ENCODE measurements at regions of chr1 and their contacts with region 1.

Region 1: GRCh38 chr1:110312188-110313121 is 26.7 kb upstream of the RBM15 start:
- DNase-seq: peak; percentile 81
- ATAC-seq: peak; percentile 80
- H3K4me3 ChIP-seq: no peak overlapping the region
- H3K27ac ChIP-seq: no peak overlapping the region
- H3K4me1 ChIP-seq: peaks cover 12% of the 10 kb centered on the region
- H3K27me3 ChIP-seq: peaks cover 4% of the 10 kb centered on the region; the same call in 1 of the 2 replicates
- CTCF ChIP-seq: peak; percentile 98
- POLR2A ChIP-seq: no peak
- RAD21 ChIP-seq: peak; percentile 99

Region 2: GRCh38 chr1:110053557-110054428 is 258.7 kb before region 1 on chr1:
- CTCF ChIA-PET with region 1: no interaction called
- POLR2A ChIA-PET with region 1: no interaction called
- dilution Hi-C with region 1: no loop called
- in situ Hi-C with region 1: no loop called
- intact Hi-C with region 1: loop called (anchors 10 kb)
- DNase-seq: peak; percentile 25
- ATAC-seq: peak; percentile 62
- H3K4me3 ChIP-seq: no peak overlapping the region
- H3K27ac ChIP-seq: no peak overlapping the region
- H3K4me1 ChIP-seq: peaks cover 36% of the 10 kb centered on the region
- H3K27me3 ChIP-seq: no peaks in the 10 kb centered on the region
- CTCF ChIP-seq: peak; percentile 89
- POLR2A ChIP-seq: no peak
- RAD21 ChIP-seq: peak; percentile 90

Region 3: GRCh38 chr1:110118636-110119615 is 193.5 kb before region 1 on chr1:
- CTCF ChIA-PET with region 1: no interaction called
- POLR2A ChIA-PET with region 1: no interaction called
- dilution Hi-C with region 1: no loop called
- in situ Hi-C with region 1: no loop called
- intact Hi-C with region 1: no loop called
- DNase-seq: peak; percentile 52
- ATAC-seq: peak; percentile 40; the same call in 1 of the 2 replicates
- H3K4me3 ChIP-seq: no peak overlapping the region
- H3K27ac ChIP-seq: no peak overlapping the region
- H3K4me1 ChIP-seq: no peaks in the 10 kb centered on the region
- H3K27me3 ChIP-seq: peaks cover 29% of the 10 kb centered on the region
- CTCF ChIP-seq: no peak
- POLR2A ChIP-seq: no peak
- RAD21 ChIP-seq: no peak

Region 4: GRCh38 chr1:110203021-110203661 is 109.3 kb before region 1 on chr1:
- CTCF ChIA-PET with region 1: interaction called, 68 read pairs
- POLR2A ChIA-PET with region 1: no interaction called
- dilution Hi-C with region 1: no loop called
- in situ Hi-C with region 1: loop called (anchors 5 kb)
- intact Hi-C with region 1: loop called (anchors 1 kb)
- DNase-seq: peak; percentile 66
- ATAC-seq: peak; percentile 86
- H3K4me3 ChIP-seq: no peak overlapping the region
- H3K27ac ChIP-seq: no peak overlapping the region
- H3K4me1 ChIP-seq: 0 out of 2 replicates have a peak, but pooled peaks cover 1% of the 10 kb centered on the region
- H3K27me3 ChIP-seq: no peaks in the 10 kb centered on the region; the same call in 1 of the 2 replicates
- CTCF ChIP-seq: peak; percentile 85
- POLR2A ChIP-seq: no peak
- RAD21 ChIP-seq: peak; percentile 87

Region 5: GRCh38 chr1:110209715-110210603 is 102.5 kb before region 1 on chr1 and contains the start of gene KCNC4:
- CTCF ChIA-PET with region 1: interaction called, 68 read pairs
- POLR2A ChIA-PET with region 1: no interaction called
- dilution Hi-C with region 1: no loop called
- in situ Hi-C with region 1: no loop called
- intact Hi-C with region 1: loop called (anchors 1 kb)
- DNase-seq: peak; percentile 58
- ATAC-seq: peak; percentile 84
- H3K4me3 ChIP-seq: peak within 1 kb of the TSS; percentile 49
- H3K27ac ChIP-seq: peak within 1 kb of the TSS; percentile 22; the same call in 1 of the 2 replicates
- H3K4me1 ChIP-seq: no peaks in the 10 kb centered on the region
- H3K27me3 ChIP-seq: peaks cover 51% of the 10 kb centered on the region
- CTCF ChIP-seq: no peak
- POLR2A ChIP-seq: no peak
- RAD21 ChIP-seq: no peak
- total RNA-seq, gene KCNC4: 0.18 and 0.28 TPM in 2 replicates

Region 6: DNA sequence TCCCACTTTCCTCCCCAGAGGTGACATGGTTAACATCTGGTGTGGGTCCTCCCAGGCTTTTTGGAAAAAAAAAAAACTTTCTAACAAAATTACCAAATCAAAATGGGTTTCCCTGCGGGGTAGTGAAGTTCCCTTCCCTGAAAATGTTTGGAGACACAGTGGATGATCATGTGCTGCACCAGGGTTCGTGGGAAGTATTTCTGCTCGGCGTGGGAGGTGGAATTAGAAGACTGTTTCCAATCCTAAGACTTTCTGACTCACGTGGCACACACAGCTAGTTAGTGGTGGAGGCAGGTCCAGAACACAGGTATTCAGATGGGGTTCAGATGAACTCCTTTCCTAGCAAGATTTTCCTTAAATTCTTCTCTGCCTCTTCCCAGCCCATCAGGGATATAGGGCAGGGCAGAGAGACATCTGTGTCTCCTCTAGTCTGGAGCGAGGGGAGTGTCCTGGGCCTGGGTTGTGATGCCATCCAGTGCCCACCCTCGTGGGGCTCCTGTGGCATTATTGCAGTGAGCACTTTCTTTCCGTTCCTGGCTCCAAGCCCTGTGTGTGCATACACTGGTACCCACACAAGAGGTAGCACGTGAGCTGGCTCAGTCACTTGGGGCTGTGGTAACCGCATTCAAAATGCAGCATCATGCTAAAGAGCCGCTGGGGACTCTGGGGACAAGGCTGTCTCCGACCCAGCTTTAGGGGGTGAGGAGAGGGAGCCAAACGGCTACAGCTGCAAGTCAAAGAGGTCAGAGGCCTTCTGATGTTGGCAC is 74.9 kb before region 1 on chr1:
- CTCF ChIA-PET with region 1: no interaction called
- POLR2A ChIA-PET with region 1: no interaction called
- dilution Hi-C with region 1: no loop called
- in situ Hi-C with region 1: no loop called
- intact Hi-C with region 1: loop called (anchors 2 kb)
- DNase-seq: no peak
- ATAC-seq: no peak
- H3K4me3 ChIP-seq: no peak overlapping the region
- H3K27ac ChIP-seq: no peak overlapping the region
- H3K4me1 ChIP-seq: peaks cover 6% of the 10 kb centered on the region; the same call in 1 of the 2 replicates
- H3K27me3 ChIP-seq: peaks cover 20% of the 10 kb centered on the region
- CTCF ChIP-seq: no peak
- POLR2A ChIP-seq: no peak
- RAD21 ChIP-seq: no peak

Region 7: DNA sequence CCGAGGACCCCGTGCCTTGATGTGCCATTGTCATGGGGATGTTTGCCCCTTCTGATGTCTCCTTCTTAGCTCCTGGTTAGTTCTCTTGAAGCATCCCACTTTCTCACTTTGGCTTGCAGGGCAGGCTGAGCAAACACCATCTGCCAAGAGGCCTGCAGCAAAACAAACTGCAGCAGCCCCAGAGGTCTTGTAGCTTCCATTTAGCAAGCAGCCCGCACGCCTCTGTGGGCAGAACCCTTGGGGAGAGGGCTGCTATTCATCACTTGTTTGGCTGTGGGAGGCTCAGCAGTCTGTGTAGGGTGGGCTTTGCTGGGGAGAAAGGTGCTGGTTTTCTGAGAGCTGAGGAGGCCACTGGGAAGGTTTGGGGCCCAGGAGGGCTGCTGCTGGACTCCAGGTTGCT is 45.6 kb before region 1 on chr1:
- CTCF ChIA-PET with region 1: no interaction called
- POLR2A ChIA-PET with region 1: no interaction called
- dilution Hi-C with region 1: no loop called
- in situ Hi-C with region 1: no loop called
- intact Hi-C with region 1: no loop called
- DNase-seq: no peak
- ATAC-seq: no peak
- H3K4me3 ChIP-seq: no peak overlapping the region
- H3K27ac ChIP-seq: no peak overlapping the region
- H3K4me1 ChIP-seq: no peaks in the 10 kb centered on the region
- H3K27me3 ChIP-seq: peaks cover 39% of the 10 kb centered on the region
- CTCF ChIP-seq: no peak
- POLR2A ChIP-seq: no peak
- RAD21 ChIP-seq: no peak

Measured in IMR-90 (cell line).